Sciatic nerve (tissue), 2 donors: ENCODE measurements at regions of chr3 and their contacts with region 1.

Region 1: DNA sequence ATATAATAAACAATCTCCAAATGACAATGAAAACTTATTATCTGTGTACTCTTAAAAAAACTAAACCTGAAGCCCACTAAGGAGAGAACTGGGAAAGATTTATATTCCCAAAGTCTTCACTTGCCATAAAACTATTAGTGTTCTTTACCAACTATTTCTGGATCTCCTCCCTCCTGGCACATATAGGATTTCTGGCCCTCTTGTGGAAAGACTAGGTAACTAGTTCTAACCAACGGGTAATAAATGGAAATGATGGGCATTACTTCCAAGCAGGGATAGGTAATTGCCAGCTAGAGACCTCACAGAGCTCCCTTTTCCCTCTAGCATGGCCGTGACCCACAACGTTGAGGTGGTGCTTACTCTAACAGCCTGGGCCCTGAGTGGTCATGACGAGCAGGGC is 110.1 kb downstream of the DNAH12 start:
- DNase-seq: no peak
- ATAC-seq: no peak

Region 2: GRCh38 chr3:57059411-57059810 is 374.6 kb before region 1 on chr3:
- intact Hi-C with region 1: loop called (anchors 5 kb)
- DNase-seq: no peak
- ATAC-seq: no peak

Region 3: DNA sequence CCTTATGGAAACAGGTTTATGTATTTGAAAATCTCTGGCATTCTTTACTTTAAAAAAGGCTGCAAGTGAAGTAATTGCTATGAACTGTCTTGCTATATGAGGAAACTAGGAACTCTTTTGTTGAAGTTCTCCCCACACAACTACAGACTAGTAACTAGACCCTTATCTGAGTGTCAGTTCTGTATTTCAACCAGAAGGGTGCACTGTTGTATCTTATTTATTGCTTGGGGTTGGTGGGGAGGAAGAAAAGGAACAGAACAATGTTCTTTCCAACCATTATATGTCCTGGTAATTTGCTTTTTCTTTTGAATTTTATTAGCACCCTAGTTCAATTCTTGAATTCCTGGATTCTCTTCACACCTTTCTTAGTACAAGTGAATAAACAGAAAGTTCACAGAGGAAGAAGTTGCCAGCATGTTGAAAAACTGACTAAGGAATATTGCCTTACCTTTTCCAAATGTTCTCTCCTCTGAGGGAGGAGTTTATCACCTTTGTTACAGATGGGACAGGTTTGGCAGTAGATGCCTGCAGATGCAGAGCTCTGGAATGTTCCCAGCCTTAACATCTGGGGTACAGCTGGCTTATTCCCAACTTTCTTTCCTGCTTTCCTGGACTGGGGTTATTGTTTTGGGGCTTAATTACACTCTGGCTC is 1778.2 kb after region 1 on chr3:
- intact Hi-C with region 1: no loop called
- DNase-seq: no peak
- ATAC-seq: peak; percentile 63